Calu3 (cell line): ENCODE measurements at regions of chr4 and their contacts with region 1.

Region 1: GRCh38 chr4:2849267-2850152 is 5.9 kb downstream of the ADD1 start:
- DNase-seq: no peak
- H3K4me3 Mint-ChIP-seq: no peak overlapping the region
- H3K27ac Mint-ChIP-seq: no peak overlapping the region
- H3K4me1 Mint-ChIP-seq: peaks cover 21% of the 10 kb centered on the region
- H3K27me3 Mint-ChIP-seq: no peaks in the 10 kb centered on the region
- CTCF ChIP-seq: no peak

Region 2: DNA sequence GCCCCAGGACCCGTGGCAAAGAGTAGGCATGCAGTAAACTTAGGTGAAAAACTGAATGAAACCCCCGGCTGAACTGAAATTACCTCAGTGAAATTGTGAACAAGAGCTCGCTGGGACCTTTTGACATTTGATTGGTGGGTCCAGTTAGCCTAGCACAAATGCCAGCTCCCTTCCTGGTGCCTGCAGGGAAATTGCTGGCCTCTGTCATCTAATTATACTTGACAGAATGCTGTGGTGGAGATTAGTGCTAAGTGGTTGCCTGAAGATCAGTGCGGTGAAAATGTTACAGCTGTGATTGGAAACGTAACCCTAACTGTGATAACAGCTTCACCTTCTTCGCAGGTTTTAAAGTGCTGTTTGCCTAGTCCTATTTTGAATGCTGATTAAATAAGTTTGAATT is 37.1 kb after region 1 on chr4:
- CTCF ChIA-PET with region 1: no interaction called
- intact Hi-C with region 1: no loop called
- DNase-seq: no peak
- H3K4me3 Mint-ChIP-seq: no peak overlapping the region
- H3K27ac Mint-ChIP-seq: no peak overlapping the region
- H3K4me1 Mint-ChIP-seq: no peaks in the 10 kb centered on the region
- H3K27me3 Mint-ChIP-seq: no peaks in the 10 kb centered on the region
- CTCF ChIP-seq: no peak

Region 3: GRCh38 chr4:2907706-2908306 is 58.3 kb after region 1 on chr4:
- CTCF ChIA-PET with region 1: no interaction called
- intact Hi-C with region 1: loop called (anchors 5 kb)
- DNase-seq: peak; percentile 46
- H3K4me3 Mint-ChIP-seq: no peak overlapping the region
- H3K27ac Mint-ChIP-seq: no peak overlapping the region
- H3K4me1 Mint-ChIP-seq: peaks cover 12% of the 10 kb centered on the region
- H3K27me3 Mint-ChIP-seq: no peaks in the 10 kb centered on the region
- CTCF ChIP-seq: no peak